Calu3 (cell line): ENCODE measurements at regions of chr6 and their contacts with region 1.

Region 1: DNA sequence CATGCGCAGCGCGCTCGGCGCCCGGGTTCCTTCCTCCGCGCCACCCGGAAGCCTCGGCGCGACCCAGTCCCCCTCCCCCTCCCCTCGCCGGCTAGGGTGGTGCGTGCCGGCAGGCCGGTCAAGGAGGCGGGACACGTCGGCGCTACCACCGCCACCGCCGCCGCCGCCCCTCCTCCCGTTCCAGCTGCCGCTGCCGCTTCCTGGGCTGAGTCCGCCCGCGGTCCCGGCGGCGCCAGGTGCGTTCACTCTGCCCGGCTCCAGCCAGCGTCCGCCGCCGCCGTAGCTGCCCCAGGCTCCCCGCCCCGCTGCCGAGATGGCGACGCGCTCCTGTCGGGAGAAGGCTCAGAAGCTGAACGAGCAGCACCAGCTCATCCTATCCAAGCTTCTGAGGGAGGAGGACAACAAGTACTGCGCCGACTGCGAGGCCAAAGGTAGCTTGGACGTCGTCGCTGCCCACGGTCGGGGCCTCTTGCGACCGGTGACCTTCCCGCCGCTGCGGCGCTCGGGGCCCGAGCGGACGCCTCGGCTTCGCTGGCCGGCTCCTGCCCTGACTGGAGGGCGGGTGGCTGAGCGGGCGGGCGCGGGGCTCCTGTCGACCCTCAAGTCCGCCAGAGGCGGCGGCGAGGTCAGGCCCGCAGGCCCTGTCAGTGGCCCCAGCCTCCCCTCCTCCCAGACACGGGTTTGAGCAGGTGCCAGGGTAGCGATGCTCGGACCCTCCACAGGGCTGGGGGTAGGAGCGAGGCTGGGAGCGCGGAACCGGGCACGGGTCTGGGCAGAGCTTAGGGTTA is at the start of gene SMAP1:
- DNase-seq: peak; percentile 99
- H3K4me3 Mint-ChIP-seq: peak within 1 kb of the TSS; percentile 81
- H3K27ac Mint-ChIP-seq: peak within 1 kb of the TSS; percentile 76
- H3K4me1 Mint-ChIP-seq: peaks cover 39% of the 10 kb centered on the region
- H3K27me3 Mint-ChIP-seq: peaks cover under 1% of the 10 kb centered on the region
- CTCF ChIP-seq: no peak
- total RNA-seq, gene SMAP1: 34.7 and 35.7 TPM in 2 replicates

Region 2: DNA sequence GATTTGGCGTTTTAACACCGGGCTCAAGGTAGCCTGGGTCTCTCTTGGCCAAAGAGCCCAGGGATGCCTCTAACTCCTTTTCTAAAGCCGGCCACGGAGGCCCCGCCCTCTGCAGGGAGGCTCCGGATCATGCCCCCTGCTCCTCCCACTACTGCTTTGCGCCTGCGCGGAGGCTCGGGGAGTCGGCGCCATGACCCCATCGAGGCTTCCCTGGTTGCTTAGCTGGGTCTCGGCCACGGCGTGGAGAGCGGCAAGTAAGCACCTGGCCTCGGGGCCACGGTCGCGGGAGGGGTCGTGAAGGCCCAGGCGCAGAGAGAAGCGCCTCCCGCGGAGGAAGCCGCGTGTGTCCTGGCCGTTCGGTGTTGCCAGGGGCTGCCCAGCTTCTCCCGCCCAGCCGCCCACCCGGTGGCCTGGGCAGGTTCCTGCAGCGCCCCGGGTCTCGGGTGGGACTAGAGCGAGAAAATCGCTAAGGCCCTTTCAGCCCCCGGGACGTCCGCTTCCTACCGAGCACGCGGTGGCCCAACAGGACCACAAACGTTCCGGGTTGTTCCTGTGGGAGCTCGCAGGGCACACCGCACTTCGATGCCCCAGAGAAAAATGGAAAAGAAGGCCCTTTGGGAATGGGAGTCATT is 101.0 kb before region 1 on chr6 and contains the start of gene SDHAF4:
- CTCF ChIA-PET with region 1: interaction called, 3 read pairs
- intact Hi-C with region 1: loop called (anchors 5 kb)
- DNase-seq: peak; percentile 97
- H3K4me3 Mint-ChIP-seq: peak within 1 kb of the TSS; percentile 72
- H3K27ac Mint-ChIP-seq: peak within 1 kb of the TSS; percentile 39
- H3K4me1 Mint-ChIP-seq: peaks cover 7% of the 10 kb centered on the region
- H3K27me3 Mint-ChIP-seq: no peaks in the 10 kb centered on the region
- CTCF ChIP-seq: no peak
- total RNA-seq, gene SDHAF4: 13.3 and 21.0 TPM in 2 replicates

Region 3: DNA sequence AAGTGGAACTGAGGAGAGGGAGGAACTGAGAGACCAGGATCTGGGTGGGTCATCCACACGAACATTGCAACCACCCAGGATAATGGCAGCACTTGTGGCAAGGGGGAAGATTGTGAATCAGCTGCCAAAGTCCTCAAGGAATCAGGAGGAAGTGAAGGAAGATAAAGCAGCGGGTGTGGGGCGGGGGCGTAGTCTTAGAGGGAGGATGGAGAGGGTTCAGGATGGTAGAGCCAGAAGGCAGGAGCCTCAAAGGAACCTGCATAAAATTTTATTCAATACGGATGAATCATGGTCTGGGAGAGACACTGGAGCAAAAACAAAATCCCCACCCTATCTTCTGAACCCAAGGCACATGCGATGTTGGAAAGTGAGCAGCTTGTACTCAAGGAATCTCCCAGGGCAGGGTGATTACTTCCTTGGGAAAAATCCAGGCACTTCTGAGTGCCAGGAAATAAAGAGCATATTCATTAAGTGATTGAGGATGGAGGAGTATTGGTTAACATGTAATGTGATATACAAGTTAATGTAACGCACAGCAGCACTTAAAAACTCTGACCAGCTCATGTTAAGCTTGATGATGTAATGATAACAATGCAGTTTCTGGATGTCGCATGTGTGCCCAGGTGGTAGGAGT is 370.9 kb after region 1 on chr6:
- CTCF ChIA-PET with region 1: no interaction called
- intact Hi-C with region 1: no loop called
- DNase-seq: no peak
- H3K4me3 Mint-ChIP-seq: no peak overlapping the region
- H3K27ac Mint-ChIP-seq: no peak overlapping the region
- H3K4me1 Mint-ChIP-seq: no peaks in the 10 kb centered on the region
- H3K27me3 Mint-ChIP-seq: peaks cover 70% of the 10 kb centered on the region
- CTCF ChIP-seq: no peak